CD4-positive, alpha-beta memory T cell (primary cell): ENCODE measurements at regions of chr4 and their contacts with region 1.

Region 1: DNA sequence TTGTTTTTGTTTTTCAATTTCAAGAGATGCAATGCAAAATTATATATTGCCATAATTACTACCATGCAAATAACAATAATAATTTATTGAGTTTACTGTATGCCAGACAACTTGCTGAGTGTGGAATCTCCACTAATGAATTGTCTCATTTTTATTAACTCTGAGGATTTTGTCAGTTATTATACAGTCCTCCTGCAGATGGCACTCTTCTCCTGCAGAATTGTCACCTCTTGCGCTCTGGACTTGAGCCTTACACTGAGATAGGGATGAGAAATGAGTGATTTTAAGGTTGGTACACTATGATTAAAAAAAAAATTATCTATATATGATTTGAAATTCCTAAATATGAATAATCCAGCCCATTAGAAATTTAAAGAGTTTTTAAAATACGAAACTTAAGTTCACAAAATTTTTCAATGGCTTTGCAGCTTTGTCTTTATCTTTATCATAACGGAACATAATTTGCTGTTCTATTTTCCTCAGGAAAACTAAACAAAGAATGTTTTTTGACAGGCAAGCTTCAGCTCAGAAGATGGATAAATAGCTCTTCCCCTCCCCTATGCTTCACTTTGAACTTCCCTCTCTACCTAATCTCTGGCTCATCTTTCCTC is 12.7 kb upstream of the PAQR3 start:
- DNase-seq: peak in 4 of 5 donors; percentile 41 to 45 (median 41)
- H3K4me3 ChIP-seq: no peak overlapping the region
- H3K4me3 Mint-ChIP-seq: no peak overlapping the region
- H3K27ac ChIP-seq: no peak overlapping the region
- H3K27ac Mint-ChIP-seq: no peak overlapping the region
- H3K4me1 ChIP-seq: no peaks in the 10 kb centered on the region
- H3K4me1 Mint-ChIP-seq: no peaks in the 10 kb centered on the region
- H3K27me3 ChIP-seq: no peaks in the 10 kb centered on the region
- H3K27me3 Mint-ChIP-seq: peaks cover 12 to 18% of the 10 kb centered on the region in 2 donors

Region 2: DNA sequence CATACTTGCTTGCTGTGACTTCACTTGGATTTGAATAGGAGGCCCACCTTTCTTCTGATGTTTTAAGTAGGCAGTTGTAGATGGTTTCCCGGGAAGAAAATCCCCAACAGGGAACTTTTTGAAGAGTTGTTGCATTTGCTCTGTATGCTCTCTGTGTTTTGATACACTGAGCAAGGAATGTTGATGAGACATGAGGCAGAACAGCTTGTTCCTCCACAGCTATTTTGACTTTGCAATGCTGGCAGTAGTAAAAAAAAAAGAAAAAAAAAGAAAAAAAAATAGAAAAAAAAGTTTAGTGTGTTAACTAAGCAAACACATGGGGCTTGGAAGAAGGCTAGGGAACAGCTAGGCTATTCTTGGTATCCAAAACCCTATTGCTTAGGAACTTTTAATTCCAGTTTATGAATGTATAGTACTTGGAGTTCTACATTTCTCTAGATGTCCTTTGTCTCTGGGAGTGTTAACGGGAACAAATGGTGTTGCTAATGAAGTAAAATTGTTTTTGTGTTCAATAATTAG is 10.7 kb after region 1 on chr4:
- CTCF ChIA-PET with region 1: interaction called, 12 read pairs
- POLR2A ChIA-PET with region 1: no interaction called
- intact Hi-C with region 1: no loop called
- DNase-seq: no peak
- H3K4me3 ChIP-seq: no peak overlapping the region
- H3K4me3 Mint-ChIP-seq: no peak overlapping the region
- H3K27ac ChIP-seq: no peak overlapping the region
- H3K27ac Mint-ChIP-seq: no peak overlapping the region
- H3K4me1 ChIP-seq: no peaks in the 10 kb centered on the region
- H3K4me1 Mint-ChIP-seq: no peaks in the 10 kb centered on the region
- H3K27me3 ChIP-seq: no peaks in the 10 kb centered on the region
- H3K27me3 Mint-ChIP-seq: peaks cover 0 to 6% of the 10 kb centered on the region in 2 donors

Region 3: DNA sequence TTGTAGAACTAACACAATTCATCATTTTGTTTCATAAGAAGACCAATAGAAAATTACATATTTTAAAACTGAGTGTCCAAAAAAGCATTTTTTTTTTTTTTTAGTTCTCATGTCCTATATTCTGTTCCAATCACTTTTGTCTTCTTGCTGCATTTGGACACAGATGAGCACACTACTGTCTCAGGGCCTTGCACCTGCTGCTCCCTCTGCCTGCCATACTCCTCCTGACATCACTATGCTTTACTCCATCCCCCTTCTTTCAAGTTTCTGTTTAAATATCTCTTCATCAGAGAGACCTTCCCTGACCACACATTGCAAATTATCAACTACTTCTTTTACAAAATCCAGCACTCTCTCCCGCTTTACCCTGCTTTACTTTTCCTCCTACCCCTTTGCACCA is 686.8 kb after region 1 on chr4:
- CTCF ChIA-PET with region 1: no interaction called
- POLR2A ChIA-PET with region 1: no interaction called
- intact Hi-C with region 1: no loop called
- DNase-seq: no peak
- H3K4me3 ChIP-seq: no peak overlapping the region
- H3K4me3 Mint-ChIP-seq: no peak overlapping the region
- H3K27ac ChIP-seq: no peak overlapping the region
- H3K27ac Mint-ChIP-seq: no peak overlapping the region
- H3K4me1 ChIP-seq: no peaks in the 10 kb centered on the region
- H3K4me1 Mint-ChIP-seq: no peaks in the 10 kb centered on the region
- H3K27me3 ChIP-seq: no peaks in the 10 kb centered on the region
- H3K27me3 Mint-ChIP-seq: peaks cover 0 to 5% of the 10 kb centered on the region in 2 donors

Region 4: DNA sequence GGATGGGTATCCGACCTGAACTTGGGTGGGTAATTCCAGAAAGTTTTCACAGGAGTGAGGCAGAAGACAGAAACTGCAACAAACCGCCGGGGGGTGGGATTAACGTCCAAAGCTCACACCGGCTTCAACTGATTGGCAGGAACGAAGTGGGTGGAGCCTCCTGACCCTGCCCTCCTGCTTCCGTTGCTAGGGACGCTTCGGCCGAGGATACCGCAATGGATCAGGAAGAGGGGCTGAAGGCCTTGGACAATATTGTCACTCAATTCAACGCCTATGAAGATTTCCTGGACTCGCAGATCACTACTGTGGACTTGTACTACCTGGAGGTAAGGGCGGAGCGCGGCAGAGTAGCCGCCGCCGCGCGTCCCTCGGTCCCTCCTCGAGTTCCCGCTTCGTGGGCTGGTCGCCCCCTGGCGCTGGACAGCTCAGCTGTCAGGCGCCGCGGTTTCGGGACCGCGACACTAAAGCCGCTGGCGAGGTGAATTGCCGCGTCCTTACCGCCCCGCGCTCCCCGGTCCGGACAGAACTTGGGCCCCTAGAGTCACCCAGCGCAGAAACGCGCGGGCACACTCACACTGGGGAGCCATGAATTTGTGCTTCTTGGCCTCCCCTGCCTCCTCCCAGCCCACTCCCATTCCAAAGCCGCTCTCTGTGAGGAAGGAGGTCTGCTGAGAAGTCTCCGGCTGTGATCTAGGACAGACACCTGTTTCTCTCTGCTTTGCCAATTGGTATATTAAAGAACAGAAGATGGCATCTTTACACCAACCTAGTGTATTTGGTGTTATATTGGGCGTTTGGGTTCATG is 1383.8 kb after region 1 on chr4 and contains the start of gene CFAP299:
- CTCF ChIA-PET with region 1: no interaction called
- POLR2A ChIA-PET with region 1: no interaction called
- intact Hi-C with region 1: loop called (anchors 10 kb)
- DNase-seq: peak in 4 of 5 donors; percentile 5 to 20 (median 16)
- H3K4me3 ChIP-seq: peak within 1 kb of the TSS; percentile 43 to 59
- H3K4me3 Mint-ChIP-seq: peak within 1 kb of the TSS; percentile 67 to 88 (median 78)
- H3K27ac ChIP-seq: no peak within 1 kb of the TSS
- H3K27ac Mint-ChIP-seq: no peak within 1 kb of the TSS
- H3K4me1 ChIP-seq: peaks cover 15% of the 10 kb centered on the region
- H3K4me1 Mint-ChIP-seq: peaks cover 6 to 13% (median 8%) of the 10 kb centered on the region in 4 donors
- H3K27me3 ChIP-seq: peaks cover 19% of the 10 kb centered on the region
- H3K27me3 Mint-ChIP-seq: peaks cover 13 to 31% of the 10 kb centered on the region in 2 donors
- total RNA-seq, gene CFAP299: not detected

Region 5: GRCh38 chr4:80751200-80751599 is 1799.2 kb after region 1 on chr4:
- CTCF ChIA-PET with region 1: no interaction called
- POLR2A ChIA-PET with region 1: no interaction called
- intact Hi-C with region 1: no loop called
- DNase-seq: no peak
- H3K4me3 ChIP-seq: no peak overlapping the region
- H3K4me3 Mint-ChIP-seq: no peak overlapping the region
- H3K27ac ChIP-seq: no peak overlapping the region
- H3K27ac Mint-ChIP-seq: no peak overlapping the region
- H3K4me1 ChIP-seq: no peaks in the 10 kb centered on the region
- H3K4me1 Mint-ChIP-seq: peaks cover 0 to 4% (median 1%) of the 10 kb centered on the region in 4 donors
- H3K27me3 ChIP-seq: no peaks in the 10 kb centered on the region
- H3K27me3 Mint-ChIP-seq: no peaks in the 10 kb centered on the region